ENCODE measurements at regions of chr5 and their contacts with region 1.

Region 1: GRCh38 chr5:62403434-62404250 is at the start of gene DIMT1:
- DNase-seq: peak; percentile 96
- ATAC-seq: peak; percentile 99
- H3K4me3 ChIP-seq: peak within 1 kb of the TSS; percentile 90 to 98 (median 94)
- H3K27ac ChIP-seq: peak within 1 kb of the TSS; percentile 97 to 98 (median 97)
- H3K4me1 ChIP-seq: peaks cover 10 to 12% of the 10 kb centered on the region in 2 donors
- H3K27me3 ChIP-seq: no peaks in the 10 kb centered on the region
- CTCF ChIP-seq: no peak
- POLR2A ChIP-seq: peak; percentile 85 to 89
- total RNA-seq, gene DIMT1: 13.5 to 28.3 (median 21.4) TPM

Region 2: GRCh38 chr5:62305715-62306322 is 97.8 kb before region 1 on chr5 and contains the start of gene KIF2A:
- in situ Hi-C with region 1: no loop called
- intact Hi-C with region 1: loop called (anchors 5 kb)
- DNase-seq: peak; percentile 68 to 84
- ATAC-seq: peak; percentile 93 to 94
- H3K4me3 ChIP-seq: peak within 1 kb of the TSS; percentile 84 to 98 (median 92)
- H3K27ac ChIP-seq: peak within 1 kb of the TSS; percentile 73 to 93 (median 89)
- H3K4me1 ChIP-seq: peaks cover 11 to 12% of the 10 kb centered on the region in 2 donors
- H3K27me3 ChIP-seq: no peaks in the 10 kb centered on the region
- CTCF ChIP-seq: peak in 2 of 5 experiments; percentile 27 to 44
- POLR2A ChIP-seq: peak; percentile 36 to 53
- total RNA-seq, gene KIF2A: 7.5 to 14.2 (median 11.8) TPM

Region 3: DNA sequence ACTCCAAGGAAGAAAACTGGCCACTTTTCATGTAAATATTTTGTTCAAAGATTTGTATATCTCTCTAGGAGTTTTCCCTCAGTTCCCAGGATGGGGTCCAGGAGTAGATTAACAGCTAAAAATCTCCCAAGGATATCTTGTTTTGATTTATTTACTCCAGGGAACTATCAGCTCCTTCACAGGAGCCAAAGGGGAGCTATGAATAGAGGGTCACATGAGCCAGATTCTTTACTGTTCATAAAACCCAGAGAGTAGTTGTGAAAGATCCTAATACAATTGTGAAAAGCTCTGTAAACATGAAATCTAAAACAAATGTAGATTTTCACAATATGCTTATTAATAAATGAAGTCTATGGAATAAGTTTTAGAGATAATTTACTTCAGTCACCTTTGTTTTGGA is 16.8 kb before region 1 on chr5:
- in situ Hi-C with region 1: no loop called
- intact Hi-C with region 1: loop called (anchors 2 kb)
- DNase-seq: no peak
- ATAC-seq: peak; percentile 72 to 78
- H3K4me3 ChIP-seq: no peak overlapping the region
- H3K27ac ChIP-seq: peak overlapping the region; percentile 3 to 70 (median 52)
- H3K4me1 ChIP-seq: peaks cover 11 to 13% of the 10 kb centered on the region in 2 donors
- H3K27me3 ChIP-seq: no peaks in the 10 kb centered on the region
- CTCF ChIP-seq: no peak
- POLR2A ChIP-seq: no peak